OCI-LY7 (cell line): ENCODE measurements at regions of chr17 and their contacts with region 1.

Region 1: DNA sequence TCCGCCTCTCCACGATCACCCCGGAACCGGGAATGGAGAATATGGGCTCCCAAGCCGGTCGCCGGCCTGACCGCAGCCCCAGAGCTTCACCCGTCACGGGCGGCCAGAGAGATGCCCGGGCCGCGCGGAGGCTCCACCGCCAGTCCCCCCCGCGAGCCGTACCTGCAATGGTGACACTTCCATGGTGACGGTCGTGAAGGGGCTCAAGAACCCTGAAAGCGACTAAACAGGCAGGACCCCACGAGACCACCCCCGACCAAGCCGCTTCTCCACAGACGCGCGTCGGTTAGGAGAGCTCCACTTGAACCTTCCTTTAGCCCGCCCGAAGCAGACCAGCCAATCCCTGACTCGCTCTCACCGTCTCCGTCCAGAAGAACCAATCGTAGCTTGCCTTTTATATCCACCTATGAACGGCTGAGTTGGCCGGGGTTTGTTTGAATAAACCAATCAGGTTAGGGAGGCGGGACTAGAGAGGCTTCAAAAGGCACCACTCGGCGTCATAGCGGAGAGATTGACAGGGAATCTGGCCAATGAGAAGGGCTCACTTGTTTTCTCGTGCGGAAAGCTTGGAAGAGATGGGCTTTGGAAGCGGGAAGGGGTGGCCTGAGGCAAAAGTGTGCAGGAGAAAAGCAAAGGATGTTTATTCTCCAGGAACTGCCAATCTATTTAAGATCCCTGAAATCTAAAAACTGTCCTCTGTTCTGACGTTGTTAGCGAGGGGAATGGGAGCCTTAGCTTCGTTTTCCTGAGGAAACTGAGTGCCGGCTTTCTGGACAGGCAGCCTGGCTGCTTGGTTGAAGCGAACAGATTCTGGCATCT is at the start of gene TOP2A:
- DNase-seq: peak; percentile 100
- H3K4me3 ChIP-seq: peak within 1 kb of the TSS; percentile 80
- H3K27ac ChIP-seq: peak within 1 kb of the TSS; percentile 74
- H3K4me1 ChIP-seq: peaks cover 28% of the 10 kb centered on the region
- CTCF ChIP-seq: no peak
- total RNA-seq, gene TOP2A: 293 and 303 TPM in 2 replicates

Region 2: GRCh38 chr17:40362696-40363110 is 55.1 kb before region 1 on chr17:
- CTCF ChIA-PET with region 1: no interaction called
- POLR2A ChIA-PET with region 1: interaction called, 3 read pairs
- intact Hi-C with region 1: loop called (anchors 5 kb)
- DNase-seq: peak; percentile 82
- H3K4me3 ChIP-seq: peak overlapping the region; percentile 53
- H3K27ac ChIP-seq: no peak overlapping the region
- H3K4me1 ChIP-seq: peaks cover 4% of the 10 kb centered on the region
- CTCF ChIP-seq: peak; percentile 83

Region 3: DNA sequence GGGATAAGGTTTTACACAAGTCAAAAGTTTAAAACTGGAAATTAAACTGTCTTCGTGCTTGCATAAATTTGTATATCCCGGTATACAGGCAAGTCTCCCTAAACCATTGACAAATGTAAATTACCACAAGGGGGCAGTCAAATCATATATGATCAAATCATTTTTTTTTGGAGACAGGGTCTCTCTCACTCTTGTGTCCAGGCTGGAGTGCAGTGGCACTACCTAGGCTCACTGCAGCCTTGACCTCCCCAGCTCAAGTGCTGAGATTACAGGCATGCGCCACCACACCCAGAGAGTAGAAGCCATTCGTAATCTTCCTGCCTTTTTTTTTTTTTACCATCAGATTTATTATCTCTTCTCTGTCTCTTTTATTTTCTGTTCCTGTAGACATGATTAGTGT is 18.6 kb before region 1 on chr17:
- CTCF ChIA-PET with region 1: interaction called, 3 read pairs
- POLR2A ChIA-PET with region 1: interaction called, 3 read pairs
- intact Hi-C with region 1: loop called (anchors 2 kb)
- DNase-seq: peak; percentile 66
- H3K4me3 ChIP-seq: no peak overlapping the region
- H3K27ac ChIP-seq: no peak overlapping the region
- H3K4me1 ChIP-seq: no peaks in the 10 kb centered on the region
- CTCF ChIP-seq: peak; percentile 90

Region 4: GRCh38 chr17:41153856-41154255 is 736.0 kb after region 1 on chr17:
- CTCF ChIA-PET with region 1: no interaction called
- POLR2A ChIA-PET with region 1: no interaction called
- intact Hi-C with region 1: no loop called
- DNase-seq: no peak
- H3K4me3 ChIP-seq: no peak overlapping the region
- H3K27ac ChIP-seq: no peak overlapping the region
- H3K4me1 ChIP-seq: no peaks in the 10 kb centered on the region
- CTCF ChIP-seq: no peak